CD8-positive, alpha-beta memory T cell (primary cell): ENCODE measurements at regions of chr15 and their contacts with region 1.

Region 1: GRCh38 chr15:85318048-85318731 is 62.2 kb upstream of the AKAP13 start:
- DNase-seq: peak in 2 of 5 donors; percentile 12 to 59
- H3K4me3 ChIP-seq: no peak overlapping the region
- H3K4me3 Mint-ChIP-seq: peak overlapping the region in 2 of 7 donors; percentile 16 to 30
- H3K27ac ChIP-seq: no peak overlapping the region
- H3K27ac Mint-ChIP-seq: peak overlapping the region in 5 of 8 donors; percentile 22 to 70 (median 52)
- H3K4me1 ChIP-seq: peaks cover 34% of the 10 kb centered on the region
- H3K4me1 Mint-ChIP-seq: peaks cover 34 to 47% (median 46%) of the 10 kb centered on the region in 3 donors
- H3K27me3 ChIP-seq: no peaks in the 10 kb centered on the region
- H3K27me3 Mint-ChIP-seq: no peaks in the 10 kb centered on the region

Region 2: GRCh38 chr15:85412956-85413854 is 95.0 kb after region 1 on chr15:
- CTCF ChIA-PET with region 1: interaction called, 13 read pairs
- POLR2A ChIA-PET with region 1: no interaction called
- DNase-seq: peak; percentile 42 to 80 (median 47)
- H3K4me3 ChIP-seq: peak overlapping the region; percentile 11
- H3K4me3 Mint-ChIP-seq: peak overlapping the region; percentile 10 to 78 (median 66)
- H3K27ac ChIP-seq: no peak overlapping the region
- H3K27ac Mint-ChIP-seq: peak overlapping the region; percentile 80 to 92 (median 85)
- H3K4me1 ChIP-seq: peaks cover 27% of the 10 kb centered on the region
- H3K4me1 Mint-ChIP-seq: peaks cover 53 to 83% (median 77%) of the 10 kb centered on the region in 3 donors
- H3K27me3 ChIP-seq: no peaks in the 10 kb centered on the region
- H3K27me3 Mint-ChIP-seq: no peaks in the 10 kb centered on the region